Prostate gland (tissue), 2 donors: ENCODE measurements at regions of chr6 and their contacts with region 1.

Region 1: DNA sequence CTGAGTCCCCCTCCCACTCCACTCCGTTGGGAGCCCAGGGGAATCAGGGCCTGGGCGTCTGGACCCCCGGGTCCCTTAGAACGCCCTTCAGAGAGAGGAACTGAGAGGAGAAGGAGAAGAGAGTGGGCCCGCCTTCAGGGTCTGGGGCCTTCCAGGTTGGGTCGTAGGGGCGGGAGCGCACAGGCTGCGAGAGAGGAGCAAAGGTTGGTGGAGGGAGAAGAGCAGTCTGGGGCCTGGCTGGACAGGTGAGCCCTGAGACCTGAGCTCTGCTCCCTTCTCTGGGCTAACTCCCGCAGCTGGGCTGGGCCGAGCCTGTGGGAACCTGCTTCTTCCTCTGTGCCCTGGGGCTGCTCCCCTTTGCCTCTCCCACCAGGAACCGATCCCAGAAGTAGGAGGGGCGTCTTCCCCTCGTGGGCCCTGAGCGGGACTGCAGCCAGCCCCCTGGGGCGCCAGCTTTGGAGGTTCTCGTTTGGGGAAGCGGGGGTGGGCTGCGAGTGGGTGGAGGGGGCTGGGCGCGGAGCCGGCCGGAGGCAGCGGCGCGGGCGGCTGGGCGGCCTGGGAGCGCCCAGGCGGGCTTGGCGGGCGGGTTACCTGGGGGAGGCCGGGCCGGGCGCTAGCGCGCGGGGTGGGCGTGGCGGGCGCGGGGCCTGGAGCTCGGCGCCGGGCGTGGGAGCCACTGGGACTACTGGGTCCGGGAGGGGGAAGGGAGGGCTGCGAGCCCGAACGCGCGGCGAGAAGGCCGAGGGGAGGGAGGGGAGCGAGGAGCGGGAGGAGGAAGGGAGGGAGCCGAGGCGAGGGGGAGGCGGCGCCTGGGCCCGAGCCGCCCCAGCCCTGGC is at the start of gene DDR1:
- DNase-seq: peak; percentile 89
- H3K4me3 ChIP-seq: peak within 1 kb of the TSS; percentile 57 to 70
- H3K27ac ChIP-seq: peak within 1 kb of the TSS; percentile 93 to 96
- H3K4me1 ChIP-seq: peaks cover 15% of the 10 kb centered on the region
- H3K27me3 ChIP-seq: no peaks in the 10 kb centered on the region
- CTCF ChIP-seq: peak in 2 of 4 experiments; percentile 8 to 13
- POLR2A ChIP-seq: peak; percentile 79
- total RNA-seq, gene DDR1: 178 to 182 TPM

Region 2: DNA sequence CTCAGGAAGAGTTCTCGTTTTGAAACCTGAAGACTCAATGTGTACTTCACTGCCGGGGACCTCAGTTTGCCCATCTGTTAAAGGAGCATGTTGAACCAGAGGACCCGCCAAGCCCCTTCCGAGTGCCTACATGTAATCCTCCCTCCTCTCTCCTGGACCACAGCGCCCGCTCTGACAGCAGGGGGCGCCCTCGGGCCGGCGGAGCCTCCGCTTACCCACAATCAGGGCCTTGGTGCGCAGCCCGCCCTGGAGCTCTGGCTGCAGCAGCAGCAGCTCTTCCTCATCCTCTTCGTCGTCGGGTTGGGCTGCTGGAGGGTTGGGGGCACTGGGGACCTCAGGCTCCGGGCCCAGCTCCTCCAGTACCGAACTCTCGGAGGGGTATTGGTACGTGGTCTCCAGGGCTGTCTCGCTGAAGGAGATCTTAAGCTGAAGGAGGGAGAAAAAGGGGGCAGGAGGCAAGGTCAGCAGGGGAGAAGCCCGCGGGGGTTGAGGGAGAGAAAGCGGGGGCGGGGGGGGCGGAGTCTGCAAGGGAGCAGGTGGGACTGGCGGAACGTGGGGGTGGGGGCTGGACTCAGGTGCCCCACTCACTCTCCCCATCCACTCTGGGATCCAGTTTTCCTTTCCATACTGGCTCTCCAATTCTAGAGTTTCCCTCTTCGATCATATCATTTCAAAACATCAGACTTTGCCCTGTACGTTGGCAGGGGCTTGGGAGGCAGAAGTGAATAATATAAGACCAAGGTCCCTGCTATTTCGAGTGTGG is 204.8 kb before region 1 on chr6:
- intact Hi-C with region 1: loop called (anchors 5 kb)
- DNase-seq: peak; percentile 78
- H3K4me3 ChIP-seq: no peak overlapping the region
- H3K27ac ChIP-seq: peak overlapping the region in 1 of 2 donors; percentile 43
- H3K4me1 ChIP-seq: peaks cover 2% of the 10 kb centered on the region
- H3K27me3 ChIP-seq: no peaks in the 10 kb centered on the region
- CTCF ChIP-seq: peak; percentile 86 to 98 (median 98)
- POLR2A ChIP-seq: no peak